Naive thymus-derived CD4-positive, alpha-beta T cell (primary cell): ENCODE measurements at regions of chr11 and their contacts with region 1.

Region 1: DNA sequence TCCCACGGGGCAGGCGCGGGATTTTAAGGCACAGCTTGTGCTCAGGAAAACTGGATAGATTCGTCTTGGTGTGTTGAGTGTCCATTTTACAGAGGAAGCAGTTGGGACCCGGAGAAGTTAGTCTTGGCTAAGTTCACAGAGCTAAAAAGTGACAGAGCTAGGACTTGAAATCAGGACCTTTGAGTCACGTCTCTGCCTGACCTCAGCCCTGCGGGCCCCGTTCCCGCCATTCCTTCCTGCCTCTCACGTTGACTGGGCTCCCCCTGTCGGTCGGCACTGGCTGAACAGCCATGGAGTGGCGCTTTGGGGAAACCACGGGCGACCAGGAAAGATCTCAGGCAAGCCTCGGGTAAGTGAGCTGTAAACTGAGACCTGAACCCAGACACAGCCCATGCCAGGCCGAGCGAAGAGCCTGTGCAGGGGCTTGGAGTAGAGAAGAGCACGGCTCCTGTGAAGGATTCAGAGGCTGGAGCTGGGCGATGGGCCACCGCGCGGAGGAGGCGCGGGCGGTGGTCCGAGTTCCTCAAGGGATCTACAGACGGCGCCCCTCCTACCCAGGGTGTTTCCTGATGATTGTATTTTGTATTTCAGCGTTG is 54.1 kb downstream of the WNT11 start:
- DNase-seq: peak; percentile 46 to 88 (median 69)
- ATAC-seq: peak; percentile 89
- H3K4me3 ChIP-seq: peak overlapping the region; percentile 54
- H3K4me3 Mint-ChIP-seq: peak overlapping the region; percentile 60 to 90 (median 78)
- H3K27ac ChIP-seq: no peak overlapping the region
- H3K27ac Mint-ChIP-seq: peak overlapping the region in 3 of 9 donors; percentile 12 to 35 (median 16)
- H3K4me1 ChIP-seq: peaks cover 0 to 27% of the 10 kb centered on the region in 2 donors
- H3K4me1 Mint-ChIP-seq: peaks cover 16 to 25% (median 21%) of the 10 kb centered on the region in 7 donors
- H3K27me3 ChIP-seq: no peaks in the 10 kb centered on the region
- H3K27me3 Mint-ChIP-seq: peaks cover 4 to 22% (median 10%) of the 10 kb centered on the region in 5 donors

Region 2: DNA sequence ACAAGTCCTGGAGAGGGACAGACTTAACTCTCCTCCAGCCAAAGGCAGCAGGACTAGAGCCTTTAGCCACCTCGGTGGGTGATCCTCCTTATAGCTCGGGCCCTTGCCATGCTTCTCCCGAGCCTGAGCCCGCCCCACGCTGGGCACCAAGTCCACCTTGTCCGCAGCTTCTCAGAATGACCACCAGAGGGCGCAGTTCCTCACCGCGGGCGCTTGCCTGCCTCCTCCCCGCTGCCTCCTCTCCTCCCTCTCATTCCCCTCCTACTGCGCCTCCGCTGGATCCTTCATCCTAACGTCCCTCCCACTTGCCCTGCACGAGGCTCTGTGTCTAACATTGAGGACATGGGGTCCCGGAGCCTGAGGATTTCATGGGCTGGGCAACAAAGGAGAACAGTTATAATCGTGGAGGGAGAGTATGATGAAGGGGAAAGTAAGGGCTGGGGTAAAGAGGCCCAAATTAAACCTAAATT is 445.9 kb before region 1 on chr11:
- CTCF ChIA-PET with region 1: no interaction called
- POLR2A ChIA-PET with region 1: no interaction called
- intact Hi-C with region 1: loop called in 1 of 2 experiments (anchors 1 kb)
- DNase-seq: peak; percentile 19 to 65 (median 53)
- ATAC-seq: peak; percentile 92
- H3K4me3 ChIP-seq: no peak overlapping the region
- H3K4me3 Mint-ChIP-seq: peak overlapping the region in 3 of 10 donors; percentile 23 to 57 (median 53)
- H3K27ac ChIP-seq: no peak overlapping the region
- H3K27ac Mint-ChIP-seq: no peak overlapping the region
- H3K4me1 ChIP-seq: no peaks in the 10 kb centered on the region
- H3K4me1 Mint-ChIP-seq: peaks cover 7 to 17% (median 11%) of the 10 kb centered on the region in 7 donors
- H3K27me3 ChIP-seq: no peaks in the 10 kb centered on the region
- H3K27me3 Mint-ChIP-seq: peaks cover 0 to 20% (median 0%) of the 10 kb centered on the region in 5 donors

Region 3: GRCh38 chr11:75721855-75722668 is 430.1 kb before region 1 on chr11:
- CTCF ChIA-PET with region 1: no interaction called
- POLR2A ChIA-PET with region 1: no interaction called
- intact Hi-C with region 1: loop called in 1 of 2 experiments (anchors 2 kb)
- DNase-seq: no peak
- ATAC-seq: no peak
- H3K4me3 ChIP-seq: no peak overlapping the region
- H3K4me3 Mint-ChIP-seq: no peak overlapping the region
- H3K27ac ChIP-seq: no peak overlapping the region
- H3K27ac Mint-ChIP-seq: no peak overlapping the region
- H3K4me1 ChIP-seq: no peaks in the 10 kb centered on the region
- H3K4me1 Mint-ChIP-seq: peaks cover 0 to 5% (median 0%) of the 10 kb centered on the region in 7 donors
- H3K27me3 ChIP-seq: no peaks in the 10 kb centered on the region
- H3K27me3 Mint-ChIP-seq: peaks cover 0 to 1% (median 0%) of the 10 kb centered on the region in 5 donors

Region 4: GRCh38 chr11:75802913-75803820 is 349.0 kb before region 1 on chr11:
- CTCF ChIA-PET with region 1: interaction called, 3 read pairs
- POLR2A ChIA-PET with region 1: no interaction called
- intact Hi-C with region 1: loop called (anchors 1 kb)
- DNase-seq: peak; percentile 39 to 67 (median 54)
- ATAC-seq: peak; percentile 91
- H3K4me3 ChIP-seq: no peak overlapping the region
- H3K4me3 Mint-ChIP-seq: no peak overlapping the region
- H3K27ac ChIP-seq: no peak overlapping the region
- H3K27ac Mint-ChIP-seq: no peak overlapping the region
- H3K4me1 ChIP-seq: peaks cover 0 to 14% of the 10 kb centered on the region in 2 donors
- H3K4me1 Mint-ChIP-seq: peaks cover 0 to 22% (median 11%) of the 10 kb centered on the region in 7 donors
- H3K27me3 ChIP-seq: no peaks in the 10 kb centered on the region
- H3K27me3 Mint-ChIP-seq: no peaks in the 10 kb centered on the region

Region 5: GRCh38 chr11:75896843-75897419 is 255.3 kb before region 1 on chr11:
- CTCF ChIA-PET with region 1: interaction called, 30 read pairs
- POLR2A ChIA-PET with region 1: no interaction called
- intact Hi-C with region 1: loop called (anchors 1 kb)
- DNase-seq: peak in 5 of 9 donors; percentile 25 to 36 (median 32)
- ATAC-seq: no peak
- H3K4me3 ChIP-seq: no peak overlapping the region
- H3K4me3 Mint-ChIP-seq: no peak overlapping the region
- H3K27ac ChIP-seq: no peak overlapping the region
- H3K27ac Mint-ChIP-seq: no peak overlapping the region
- H3K4me1 ChIP-seq: no peaks in the 10 kb centered on the region
- H3K4me1 Mint-ChIP-seq: peaks cover 3 to 17% (median 4%) of the 10 kb centered on the region in 7 donors
- H3K27me3 ChIP-seq: no peaks in the 10 kb centered on the region
- H3K27me3 Mint-ChIP-seq: no peaks in the 10 kb centered on the region

Region 6: GRCh38 chr11:76185931-76186401 is 33.8 kb after region 1 on chr11:
- CTCF ChIA-PET with region 1: no interaction called
- POLR2A ChIA-PET with region 1: no interaction called
- intact Hi-C with region 1: no loop called
- DNase-seq: no peak
- ATAC-seq: no peak
- H3K4me3 ChIP-seq: no peak overlapping the region
- H3K4me3 Mint-ChIP-seq: no peak overlapping the region
- H3K27ac ChIP-seq: no peak overlapping the region
- H3K27ac Mint-ChIP-seq: peak overlapping the region in 1 of 9 donors; percentile 47
- H3K4me1 ChIP-seq: no peaks in the 10 kb centered on the region
- H3K4me1 Mint-ChIP-seq: peaks cover 0 to 2% (median 0%) of the 10 kb centered on the region in 7 donors
- H3K27me3 ChIP-seq: no peaks in the 10 kb centered on the region
- H3K27me3 Mint-ChIP-seq: no peaks in the 10 kb centered on the region

Region 7: GRCh38 chr11:76392870-76393269 is 240.7 kb after region 1 on chr11:
- CTCF ChIA-PET with region 1: no interaction called
- POLR2A ChIA-PET with region 1: no interaction called
- intact Hi-C with region 1: no loop called
- DNase-seq: no peak
- ATAC-seq: peak; percentile 41
- H3K4me3 ChIP-seq: no peak overlapping the region
- H3K4me3 Mint-ChIP-seq: no peak overlapping the region
- H3K27ac ChIP-seq: no peak overlapping the region
- H3K27ac Mint-ChIP-seq: no peak overlapping the region
- H3K4me1 ChIP-seq: no peaks in the 10 kb centered on the region
- H3K4me1 Mint-ChIP-seq: peaks cover 0 to 4% (median 0%) of the 10 kb centered on the region in 7 donors
- H3K27me3 ChIP-seq: no peaks in the 10 kb centered on the region
- H3K27me3 Mint-ChIP-seq: peaks cover 0 to 12% (median 0%) of the 10 kb centered on the region in 5 donors